Dorsolateral prefrontal cortex (tissue), 120 donors: ENCODE measurements at regions of chr20 and their contacts with region 1.

Region 1: GRCh38 chr20:1466211-1467081 is at the start of gene NSFL1C:
- DNase-seq: peak; percentile 80 to 97 (median 91)
- H3K4me3 ChIP-seq: peak within 1 kb of the TSS; percentile 62 to 100 (median 96)
- H3K27ac ChIP-seq: peak within 1 kb of the TSS; percentile 49 to 96 (median 89)
- H3K27me3 ChIP-seq: no peaks in the 10 kb centered on the region
- CTCF ChIP-seq: peak in 55 of 56 donors; percentile 89 to 100 (median 98)
- total RNA-seq, gene NSFL1C: 69.8 to 147 (median 107) TPM

Region 2: GRCh38 chr20:1118336-1119127 is 347.9 kb before region 1 on chr20 and contains the start of gene PSMF1:
- intact Hi-C with region 1: loop called (anchors 2 to 5 kb)
- DNase-seq: peak; percentile 85 to 95 (median 92)
- H3K4me3 ChIP-seq: peak within 1 kb of the TSS; percentile 59 to 100 (median 96)
- H3K27ac ChIP-seq: peak within 1 kb of the TSS; percentile 29 to 91 (median 77)
- H3K27me3 ChIP-seq: no peaks in the 10 kb centered on the region
- CTCF ChIP-seq: peak in 53 of 56 donors; percentile 13 to 71 (median 48)
- total RNA-seq, gene PSMF1: 72.6 to 177 (median 122) TPM

Region 3: GRCh38 chr20:1313236-1313964 is 153.0 kb before region 1 on chr20:
- intact Hi-C with region 1: loop called in 1 of 2 experiments (anchors 2 kb)
- DNase-seq: peak; percentile 62 to 85 (median 74)
- H3K4me3 ChIP-seq: peak overlapping the region; percentile 23 to 71 (median 55)
- H3K27ac ChIP-seq: peak overlapping the region in 53 of 59 donors; percentile 2 to 84 (median 57)
- H3K27me3 ChIP-seq: no peaks in the 10 kb centered on the region
- CTCF ChIP-seq: peak; percentile 84 to 100 (median 99)

Region 4: DNA sequence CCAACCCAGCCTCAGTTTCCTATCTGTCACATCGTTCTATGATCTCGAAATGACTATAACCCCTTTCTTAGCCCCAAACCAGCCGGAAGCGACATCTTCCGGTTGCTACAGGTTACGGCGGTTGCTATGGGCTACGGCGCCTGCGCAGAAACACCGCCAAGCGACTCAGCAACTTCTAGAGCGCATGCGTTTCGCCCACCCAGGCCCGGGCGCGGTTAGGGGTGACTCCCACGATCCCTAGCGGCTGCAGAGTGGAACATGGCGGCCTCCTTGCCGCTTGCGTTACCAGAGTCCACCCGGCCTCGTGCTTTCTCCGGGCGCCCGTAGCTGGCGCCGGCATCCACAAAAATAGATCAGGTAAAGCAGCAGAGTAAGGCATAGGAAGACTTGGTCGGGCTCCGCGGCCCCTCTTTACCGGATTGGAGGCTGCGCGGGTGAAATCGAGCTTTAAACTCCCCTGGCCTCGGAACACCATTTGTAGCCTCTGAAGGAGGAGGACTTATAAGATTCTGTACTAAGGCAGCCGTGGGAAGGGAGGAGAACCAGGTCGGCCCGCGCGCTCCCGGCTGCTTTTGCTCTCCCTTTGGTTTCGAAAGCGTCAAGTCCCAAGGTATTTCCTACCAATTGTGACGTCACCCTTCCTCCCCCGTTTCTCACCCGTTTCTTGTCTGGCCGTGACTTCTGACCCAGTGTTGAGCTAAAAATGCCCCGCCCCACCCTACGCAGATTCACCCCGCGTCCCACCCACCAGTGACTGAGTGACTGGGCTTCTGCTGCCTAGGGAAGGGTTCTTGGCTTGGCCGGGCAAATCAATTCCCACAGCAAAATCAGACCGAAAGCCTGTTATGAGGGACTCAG is 141.0 kb before region 1 on chr20:
- intact Hi-C with region 1: loop called in 1 of 2 experiments (anchors 2 kb)
- DNase-seq: peak; percentile 92 to 96 (median 95)
- H3K4me3 ChIP-seq: peak overlapping the region; percentile 62 to 100 (median 93)
- H3K27ac ChIP-seq: peak overlapping the region; percentile 66 to 100 (median 97)
- H3K27me3 ChIP-seq: no peaks in the 10 kb centered on the region
- CTCF ChIP-seq: peak in 55 of 56 donors; percentile 14 to 76 (median 59)

Region 5: DNA sequence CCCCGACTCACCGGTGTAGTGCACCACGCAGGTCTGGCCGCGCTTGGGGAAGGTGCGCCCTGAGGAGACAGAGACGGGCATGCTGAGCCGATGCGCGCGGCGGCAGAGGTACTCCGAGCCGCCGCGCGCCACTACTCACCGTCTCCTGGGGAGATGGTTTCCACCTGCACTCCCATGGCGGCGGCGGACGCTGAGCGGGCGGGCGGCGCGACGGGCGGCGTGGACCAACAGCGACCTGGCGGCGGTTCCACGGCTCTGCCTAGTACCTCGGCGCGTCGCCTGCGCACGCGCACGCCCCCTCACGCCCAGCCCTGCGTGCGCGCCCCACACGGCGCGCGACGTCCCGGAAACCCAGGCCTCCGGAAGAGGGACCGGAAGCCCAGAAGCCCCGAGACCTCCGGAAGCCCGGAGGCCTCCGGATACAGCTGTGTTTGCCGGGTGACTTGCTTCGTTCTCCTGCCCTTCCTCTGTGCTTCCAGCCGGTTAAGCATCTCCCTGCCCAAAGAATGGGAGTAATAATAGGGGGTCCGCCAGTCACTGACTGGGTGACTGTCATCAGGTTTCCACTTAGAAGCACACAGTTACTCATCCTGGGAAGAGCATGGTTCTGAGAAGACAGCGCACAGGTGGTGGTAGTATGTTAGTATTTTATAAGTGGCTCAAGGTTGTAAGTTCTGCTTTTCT is 73.5 kb before region 1 on chr20 and contains the start of gene FKBP1A:
- intact Hi-C with region 1: loop called (anchors 2 to 10 kb)
- DNase-seq: peak; percentile 73 to 91 (median 87)
- H3K4me3 ChIP-seq: peak within 1 kb of the TSS; percentile 59 to 96 (median 84)
- H3K27ac ChIP-seq: peak within 1 kb of the TSS in 58 of 59 donors; percentile 20 to 94 (median 80)
- H3K27me3 ChIP-seq: peaks cover 0 to 16% (median 0%) of the 10 kb centered on the region in 45 donors
- CTCF ChIP-seq: peak in 51 of 56 donors; percentile 15 to 69 (median 46)
- total RNA-seq, gene FKBP1A: 106 to 317 (median 196) TPM

Region 6: DNA sequence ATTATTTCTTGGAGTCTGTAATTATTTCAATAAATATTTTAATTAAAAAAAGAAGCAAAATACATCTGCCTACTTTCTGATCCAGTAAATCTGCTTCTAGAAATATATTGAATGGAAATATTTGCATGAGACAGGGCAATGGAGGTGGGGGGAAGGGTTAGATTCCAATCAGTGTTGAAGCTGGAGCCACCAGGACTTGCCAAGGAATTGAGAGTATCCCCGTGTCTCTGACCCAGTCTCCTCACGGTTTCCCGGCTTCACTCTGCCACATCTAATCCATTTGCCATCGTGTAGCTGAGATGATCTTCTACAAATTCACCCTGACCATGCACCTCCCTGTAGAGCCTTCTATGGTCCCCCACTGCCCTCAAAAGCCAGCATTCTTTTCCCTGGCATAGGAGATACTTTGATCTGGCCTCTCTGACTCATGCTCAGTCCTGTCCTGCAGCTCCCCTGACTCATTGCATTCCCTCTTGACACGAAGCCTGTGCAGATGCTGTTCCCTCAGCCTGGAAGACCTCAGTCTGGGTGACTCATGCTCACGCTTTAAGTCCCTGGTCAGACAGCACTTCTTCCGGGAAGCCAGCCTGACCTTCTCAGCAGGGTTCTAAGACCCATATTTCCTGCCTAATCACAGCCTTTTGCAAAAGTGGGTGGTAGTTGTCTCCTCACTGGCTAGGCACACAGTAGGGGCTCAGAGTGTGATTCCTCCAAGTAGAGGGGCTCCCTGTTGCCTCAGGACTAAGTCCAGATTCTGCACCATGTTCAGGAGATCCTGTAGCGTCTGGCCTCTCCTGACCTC is 50.6 kb before region 1 on chr20:
- intact Hi-C with region 1: loop called in 1 of 2 experiments (anchors 10 kb)
- DNase-seq: no peak
- H3K4me3 ChIP-seq: no peak overlapping the region
- H3K27ac ChIP-seq: no peak overlapping the region
- H3K27me3 ChIP-seq: peaks cover 0 to 2% (median 0%) of the 10 kb centered on the region in 45 donors
- CTCF ChIP-seq: no peak

Region 7: DNA sequence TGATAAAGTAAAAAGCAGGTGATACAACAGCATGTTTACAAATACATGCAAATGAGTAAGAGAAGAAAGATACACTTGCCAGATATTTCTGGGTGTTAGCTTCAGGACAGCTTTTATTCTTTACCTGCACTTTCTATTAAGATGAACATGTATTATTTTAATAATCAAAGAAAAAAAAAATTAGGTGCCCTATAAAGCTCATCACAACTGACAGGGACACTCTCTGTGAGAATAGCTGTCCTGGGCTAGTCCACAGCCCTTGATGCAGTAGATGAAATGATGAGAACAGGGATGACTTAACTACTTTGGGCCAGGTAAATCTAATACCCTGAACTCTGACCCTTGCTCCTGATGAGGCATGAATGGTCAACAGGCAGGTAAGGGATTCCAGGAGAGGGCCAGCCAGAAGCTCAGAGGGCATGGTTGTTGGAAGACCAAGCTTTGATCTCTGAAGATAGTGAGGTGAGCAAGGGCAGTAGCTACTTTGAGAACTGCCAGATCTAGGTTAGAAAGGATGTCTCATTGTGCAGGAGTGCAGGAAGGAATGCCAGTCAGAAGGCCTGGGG is 15.4 kb before region 1 on chr20:
- intact Hi-C with region 1: no loop called
- DNase-seq: no peak
- H3K4me3 ChIP-seq: no peak overlapping the region
- H3K27ac ChIP-seq: no peak overlapping the region
- H3K27me3 ChIP-seq: no peaks in the 10 kb centered on the region
- CTCF ChIP-seq: no peak

Region 8: DNA sequence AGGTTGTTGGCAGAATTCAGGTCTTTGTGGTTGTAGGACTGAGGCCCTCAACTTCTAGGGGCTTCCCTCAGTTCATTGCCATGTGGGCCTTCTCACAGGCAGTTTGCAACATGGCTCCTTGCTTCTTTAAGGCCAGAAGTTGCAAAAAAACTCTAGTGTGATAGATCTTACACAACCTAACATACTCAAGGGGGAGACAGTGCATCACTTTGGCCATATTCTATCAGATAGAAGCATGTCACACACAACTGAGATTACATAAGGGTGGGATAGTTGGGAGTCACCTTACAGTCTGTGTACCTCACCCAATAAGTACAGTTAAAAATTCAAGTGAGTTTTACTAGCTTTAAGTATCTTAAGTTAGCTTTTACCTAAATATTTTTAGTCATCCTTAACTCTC is 89.5 kb after region 1 on chr20:
- intact Hi-C with region 1: no loop called
- DNase-seq: no peak
- H3K4me3 ChIP-seq: no peak overlapping the region
- H3K27ac ChIP-seq: no peak overlapping the region
- H3K27me3 ChIP-seq: no peaks in the 10 kb centered on the region
- CTCF ChIP-seq: no peak

Region 9: DNA sequence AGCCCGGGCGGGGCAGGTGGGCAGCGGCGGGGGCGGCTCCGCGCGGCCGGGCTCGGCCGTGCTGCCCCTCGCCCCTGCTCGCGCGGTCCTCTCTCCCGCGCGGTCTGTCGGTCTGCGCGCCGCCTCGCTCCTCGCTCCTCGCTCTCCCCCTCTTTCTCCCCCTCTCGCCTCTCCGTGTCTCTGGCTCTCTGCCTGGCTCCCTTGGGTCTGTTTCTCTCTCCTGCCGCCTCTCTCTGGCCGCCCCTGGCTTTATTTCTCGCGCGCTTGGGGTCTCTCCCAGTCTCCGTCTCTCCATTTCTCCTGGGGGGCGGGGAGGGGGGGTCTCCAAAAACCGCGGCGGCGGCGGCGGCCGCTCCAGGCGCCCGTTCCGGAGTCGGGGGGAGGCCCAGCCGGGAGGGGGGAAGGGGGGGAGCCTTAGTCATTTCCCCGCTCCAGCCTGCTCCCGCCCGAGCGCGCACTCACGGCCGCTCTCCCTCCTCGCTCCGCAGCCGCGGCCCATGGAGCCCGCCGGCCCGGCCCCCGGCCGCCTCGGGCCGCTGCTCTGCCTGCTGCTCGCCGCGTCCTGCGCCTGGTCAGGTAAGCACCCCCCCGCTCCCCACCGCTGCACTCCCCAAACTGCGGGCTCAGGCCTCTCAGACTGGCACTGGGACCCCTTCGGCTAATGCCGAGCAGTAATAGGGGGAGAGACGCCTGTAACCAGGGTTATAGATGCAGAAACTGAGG is 428.7 kb after region 1 on chr20 and contains the start of gene SIRPA:
- intact Hi-C with region 1: loop called in 1 of 2 experiments (anchors 10 kb)
- DNase-seq: peak; percentile 57 to 82 (median 73)
- H3K4me3 ChIP-seq: peak within 1 kb of the TSS; percentile 59 to 98 (median 84)
- H3K27ac ChIP-seq: peak within 1 kb of the TSS; percentile 88 to 100 (median 99)
- H3K27me3 ChIP-seq: no peaks in the 10 kb centered on the region
- CTCF ChIP-seq: peak in 1 of 56 donors; percentile 17
- total RNA-seq, gene SIRPA: 164 to 389 (median 265) TPM